Activated naive CD4-positive, alpha-beta T cell treated with anti-CD3 and anti-CD28 coated beads for 36 hours (primary cell): ENCODE measurements at regions of chr4 and their contacts with region 1.

Region 1: DNA sequence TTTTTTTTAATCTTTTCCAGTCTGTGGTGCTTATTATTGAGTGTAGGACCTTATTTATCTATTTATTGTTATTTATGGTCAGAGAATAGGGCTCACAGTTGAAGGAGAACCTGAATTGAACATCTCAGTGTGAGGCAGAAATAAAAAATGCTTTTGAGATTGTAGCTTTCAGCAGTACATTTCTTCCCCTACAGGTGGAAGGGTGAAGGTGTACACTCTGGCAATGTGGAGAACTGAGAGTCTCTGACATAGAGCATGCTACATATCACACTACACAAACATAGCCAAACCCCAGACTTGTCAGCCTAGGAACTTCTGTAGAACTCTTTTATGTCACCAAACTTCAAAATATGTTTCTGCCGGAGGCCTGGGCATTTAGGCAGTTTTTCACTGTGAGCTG is 140.2 kb downstream of the STIM2 start:
- DNase-seq: peak; percentile 30
- H3K4me3 Mint-ChIP-seq: no peak overlapping the region
- H3K27ac Mint-ChIP-seq: no peak overlapping the region
- H3K4me1 Mint-ChIP-seq: peaks cover 63% of the 10 kb centered on the region
- H3K27me3 Mint-ChIP-seq: no peaks in the 10 kb centered on the region

Region 2: GRCh38 chr4:25981749-25982148 is 1019.1 kb before region 1 on chr4:
- CTCF ChIA-PET with region 1: no interaction called
- intact Hi-C with region 1: loop called (anchors 10 kb)
- DNase-seq: no peak
- H3K4me3 Mint-ChIP-seq: no peak overlapping the region
- H3K27ac Mint-ChIP-seq: no peak overlapping the region
- H3K4me1 Mint-ChIP-seq: no peaks in the 10 kb centered on the region
- H3K27me3 Mint-ChIP-seq: no peaks in the 10 kb centered on the region

Region 3: GRCh38 chr4:26731351-26732035 is 269.3 kb before region 1 on chr4:
- CTCF ChIA-PET with region 1: no interaction called
- intact Hi-C with region 1: loop called (anchors 5 kb)
- DNase-seq: no peak
- H3K4me3 Mint-ChIP-seq: no peak overlapping the region
- H3K27ac Mint-ChIP-seq: no peak overlapping the region
- H3K4me1 Mint-ChIP-seq: peaks cover 11% of the 10 kb centered on the region
- H3K27me3 Mint-ChIP-seq: no peaks in the 10 kb centered on the region

Region 4: GRCh38 chr4:26873391-26874026 is 127.3 kb before region 1 on chr4:
- CTCF ChIA-PET with region 1: interaction called, 3 read pairs
- intact Hi-C with region 1: loop called (anchors 1 kb)
- DNase-seq: peak; percentile 89
- H3K4me3 Mint-ChIP-seq: no peak overlapping the region
- H3K27ac Mint-ChIP-seq: peak overlapping the region; percentile 69
- H3K4me1 Mint-ChIP-seq: peaks cover 80% of the 10 kb centered on the region
- H3K27me3 Mint-ChIP-seq: no peaks in the 10 kb centered on the region

Region 5: DNA sequence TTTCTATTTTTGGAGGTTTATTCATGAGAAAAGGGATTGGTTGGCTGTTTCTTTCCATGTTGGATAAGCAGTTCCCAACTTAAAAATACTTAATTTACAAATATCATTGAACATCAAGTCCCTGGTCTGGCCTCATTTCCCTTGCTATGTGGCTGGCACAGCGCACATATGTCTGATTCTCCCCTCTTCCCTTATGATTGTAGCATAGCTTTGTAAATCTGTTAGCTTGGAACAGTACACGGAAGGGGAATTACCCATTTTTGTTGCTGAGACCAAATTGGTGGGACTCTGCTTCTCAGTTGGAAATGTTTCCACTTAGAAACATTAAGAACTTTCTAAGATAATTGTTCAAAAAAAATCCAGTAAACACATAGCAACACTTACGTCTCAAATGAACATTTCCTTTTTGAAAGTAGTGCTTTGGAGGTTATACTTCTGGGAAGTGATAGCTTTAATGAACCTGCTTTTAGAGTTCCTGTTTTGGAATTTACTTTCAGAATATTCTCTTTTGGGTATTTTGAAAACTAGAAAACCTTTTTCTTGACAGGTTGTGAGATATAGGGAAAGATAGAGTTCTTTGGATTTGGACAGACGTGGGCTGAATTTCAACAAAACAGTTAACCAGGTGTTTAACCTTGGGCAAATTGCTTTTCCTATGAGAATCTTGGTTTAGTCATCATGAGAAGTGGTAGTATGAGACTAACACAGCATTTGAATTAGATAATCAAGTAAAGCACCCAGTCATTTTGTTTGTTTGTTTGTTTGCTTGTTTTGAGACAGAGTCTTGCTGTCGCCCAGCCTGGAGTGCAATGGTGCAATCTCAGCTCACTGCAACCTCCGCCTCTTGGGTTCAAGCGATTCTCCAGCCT is 92.9 kb before region 1 on chr4:
- CTCF ChIA-PET with region 1: interaction called, 3 read pairs
- intact Hi-C with region 1: loop called (anchors 1 kb)
- DNase-seq: peak; percentile 23
- H3K4me3 Mint-ChIP-seq: peak overlapping the region; percentile 8
- H3K27ac Mint-ChIP-seq: peak overlapping the region; percentile 74
- H3K4me1 Mint-ChIP-seq: peaks cover 73% of the 10 kb centered on the region
- H3K27me3 Mint-ChIP-seq: no peaks in the 10 kb centered on the region

Region 6: GRCh38 chr4:27048429-27049238 is 47.8 kb after region 1 on chr4:
- CTCF ChIA-PET with region 1: no interaction called
- intact Hi-C with region 1: no loop called
- DNase-seq: no peak
- H3K4me3 Mint-ChIP-seq: no peak overlapping the region
- H3K27ac Mint-ChIP-seq: no peak overlapping the region
- H3K4me1 Mint-ChIP-seq: peaks cover 8% of the 10 kb centered on the region
- H3K27me3 Mint-ChIP-seq: peaks cover 39% of the 10 kb centered on the region

Region 7: DNA sequence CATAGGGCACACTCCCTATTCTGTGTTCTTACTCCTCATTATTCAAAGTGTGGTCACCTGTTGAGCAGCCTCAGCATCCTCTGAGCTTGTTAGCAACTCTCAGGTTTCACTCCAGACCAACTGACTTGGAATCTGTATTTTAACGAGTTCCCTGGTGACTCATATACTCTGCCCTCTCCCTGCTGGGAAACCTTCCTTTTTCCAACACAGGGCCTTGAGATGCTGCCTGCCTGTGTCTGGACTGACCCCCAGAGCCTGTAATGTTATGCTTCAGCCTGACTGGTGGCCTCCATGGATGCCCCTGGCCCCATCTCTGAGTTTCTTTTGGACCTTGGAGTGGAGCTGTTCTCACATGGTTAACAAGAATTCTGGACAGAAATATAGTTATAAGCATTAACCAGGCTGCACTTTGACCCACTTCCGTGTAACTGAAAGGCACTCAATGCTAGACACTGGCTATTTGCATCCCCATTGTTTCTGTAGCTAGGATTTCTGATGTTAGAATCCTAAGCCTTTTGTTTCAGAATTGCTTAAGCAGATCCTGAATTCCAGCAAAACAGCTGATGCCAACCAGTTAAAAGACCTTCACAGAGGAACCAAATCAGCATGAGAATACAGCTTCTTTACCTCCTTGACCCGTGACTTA is 122.4 kb after region 1 on chr4:
- CTCF ChIA-PET with region 1: no interaction called
- intact Hi-C with region 1: no loop called
- DNase-seq: no peak
- H3K4me3 Mint-ChIP-seq: no peak overlapping the region
- H3K27ac Mint-ChIP-seq: no peak overlapping the region
- H3K4me1 Mint-ChIP-seq: no peaks in the 10 kb centered on the region
- H3K27me3 Mint-ChIP-seq: peaks cover 3% of the 10 kb centered on the region